T-cell (primary cell): ENCODE measurements at regions of chr2 and their contacts with region 1.

Region 1: DNA sequence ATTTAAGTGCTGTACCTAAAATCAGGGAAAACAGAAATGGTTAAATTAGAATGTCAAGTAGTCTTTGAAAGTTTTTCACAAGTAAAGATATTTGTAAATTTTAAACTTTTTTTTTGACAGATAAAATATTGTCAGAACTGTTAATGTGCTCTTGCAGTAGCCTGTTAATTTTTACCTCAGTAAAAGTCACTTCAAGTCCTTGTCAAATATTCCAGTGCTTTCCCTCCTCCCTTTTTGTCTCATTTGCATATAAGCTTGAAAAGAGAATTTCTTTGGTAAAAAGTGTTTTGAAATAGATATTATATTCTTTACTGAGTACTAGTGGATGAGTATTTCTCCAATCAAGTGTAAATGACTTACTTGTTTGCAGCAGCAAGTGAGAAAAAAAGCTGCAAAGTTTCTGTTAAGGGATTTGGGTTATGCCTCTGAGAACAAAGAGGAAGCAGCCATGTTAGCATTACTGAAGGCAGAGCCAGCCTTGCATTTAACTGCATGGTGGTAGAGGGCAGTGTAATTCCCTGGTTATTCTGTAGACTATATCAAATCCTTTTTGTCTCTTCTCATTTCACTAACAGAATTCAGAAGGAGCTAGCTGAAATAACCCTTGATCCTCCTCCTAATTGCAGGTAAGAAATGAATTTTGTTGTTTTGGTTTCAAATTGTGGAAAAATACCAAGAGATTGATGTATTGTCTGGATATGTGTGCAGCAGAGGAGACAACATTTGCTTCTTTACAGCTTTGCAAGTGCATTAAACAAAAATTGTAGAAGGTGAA is 3.2 kb downstream of the UBE2E3 start:
- DNase-seq: peak in 22 of 35 experiments; percentile 3 to 67 (median 19)
- ATAC-seq: peak in 3 of 4 experiments; percentile 28 to 53 (median 31)
- H3K4me3 ChIP-seq: no peak overlapping the region
- H3K4me3 Mint-ChIP-seq: peak overlapping the region in 1 of 3 donors; percentile 41
- H3K27ac ChIP-seq: no peak overlapping the region
- H3K27ac Mint-ChIP-seq: no peak overlapping the region
- H3K4me1 ChIP-seq: peaks cover 15 to 25% of the 10 kb centered on the region in 2 experiments
- H3K4me1 Mint-ChIP-seq: peaks cover 36 to 60% (median 57%) of the 10 kb centered on the region in 3 donors
- H3K27me3 ChIP-seq: no peaks in the 10 kb centered on the region
- H3K27me3 Mint-ChIP-seq: no peaks in the 10 kb centered on the region

Region 2: GRCh38 chr2:181036848-181037603 is 53.4 kb after region 1 on chr2:
- CTCF ChIA-PET with region 1: interaction called in 1 of 2 experiments, 12 read pairs
- POLR2A ChIA-PET with region 1: no interaction called
- DNase-seq: peak in 1 of 35 experiments; percentile 3
- ATAC-seq: peak in 1 of 4 experiments; percentile 55
- H3K4me3 ChIP-seq: no peak overlapping the region
- H3K4me3 Mint-ChIP-seq: no peak overlapping the region
- H3K27ac ChIP-seq: no peak overlapping the region
- H3K27ac Mint-ChIP-seq: no peak overlapping the region
- H3K4me1 ChIP-seq: peaks cover 0 to 2% of the 10 kb centered on the region in 2 experiments
- H3K4me1 Mint-ChIP-seq: peaks cover 16 to 30% (median 20%) of the 10 kb centered on the region in 3 donors
- H3K27me3 ChIP-seq: no peaks in the 10 kb centered on the region
- H3K27me3 Mint-ChIP-seq: no peaks in the 10 kb centered on the region

Region 3: GRCh38 chr2:181052523-181052891 is 68.9 kb after region 1 on chr2:
- CTCF ChIA-PET with region 1: no interaction called
- POLR2A ChIA-PET with region 1: no interaction called
- DNase-seq: no peak
- ATAC-seq: no peak
- H3K4me3 ChIP-seq: no peak overlapping the region
- H3K4me3 Mint-ChIP-seq: no peak overlapping the region
- H3K27ac ChIP-seq: no peak overlapping the region
- H3K27ac Mint-ChIP-seq: no peak overlapping the region
- H3K4me1 ChIP-seq: no peaks in the 10 kb centered on the region
- H3K4me1 Mint-ChIP-seq: peaks cover 7 to 10% (median 9%) of the 10 kb centered on the region in 3 donors
- H3K27me3 ChIP-seq: no peaks in the 10 kb centered on the region
- H3K27me3 Mint-ChIP-seq: no peaks in the 10 kb centered on the region

Region 4: DNA sequence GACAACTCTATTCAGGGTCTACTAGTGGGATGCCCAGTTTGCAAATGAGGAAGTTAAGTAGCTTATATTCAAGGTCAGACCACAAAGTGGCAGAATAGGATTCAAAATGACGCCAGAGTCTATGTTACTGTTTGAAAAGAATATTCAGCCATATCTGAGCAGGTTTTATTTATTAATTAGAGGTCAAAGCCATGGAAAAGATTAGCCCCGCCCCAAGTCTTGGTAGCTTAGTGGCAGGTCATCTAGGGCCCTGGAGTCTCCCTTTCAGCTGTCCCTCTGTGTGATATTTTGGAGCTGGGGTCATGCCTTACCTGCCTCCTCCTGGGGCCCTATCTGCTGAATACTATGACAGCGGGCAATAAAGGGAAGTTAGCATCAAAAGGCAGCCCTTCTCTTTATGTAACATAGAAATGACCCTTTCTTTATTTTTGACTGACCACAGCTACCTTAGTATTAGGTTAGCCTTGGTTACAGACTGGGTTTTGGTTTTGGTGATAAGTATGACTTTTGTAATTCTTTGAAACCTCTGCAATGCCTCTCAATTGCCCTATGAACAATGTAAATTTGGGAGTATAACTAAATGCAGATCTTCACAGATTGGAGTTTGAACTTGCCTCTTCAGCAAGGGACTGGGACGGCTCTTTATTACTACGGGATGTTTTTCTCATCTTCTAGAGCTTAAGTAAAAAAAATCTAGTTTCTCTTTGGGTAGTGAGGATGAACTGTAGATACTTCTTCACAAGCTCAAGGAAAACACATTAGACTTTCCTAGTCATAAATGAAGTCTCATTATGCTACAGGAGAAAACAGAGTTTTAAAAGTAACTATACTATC is 320.6 kb after region 1 on chr2:
- CTCF ChIA-PET with region 1: no interaction called
- POLR2A ChIA-PET with region 1: no interaction called
- DNase-seq: peak in 1 of 35 experiments; percentile 49
- ATAC-seq: peak in 3 of 4 experiments; percentile 6 to 23 (median 12)
- H3K4me3 ChIP-seq: no peak overlapping the region
- H3K4me3 Mint-ChIP-seq: peak overlapping the region; percentile 34 to 80 (median 46)
- H3K27ac ChIP-seq: peak overlapping the region; percentile 98
- H3K27ac Mint-ChIP-seq: peak overlapping the region; percentile 96 to 100
- H3K4me1 ChIP-seq: peaks cover 49 to 72% of the 10 kb centered on the region in 2 experiments
- H3K4me1 Mint-ChIP-seq: peaks cover 77 to 85% (median 84%) of the 10 kb centered on the region in 3 donors
- H3K27me3 ChIP-seq: no peaks in the 10 kb centered on the region
- H3K27me3 Mint-ChIP-seq: no peaks in the 10 kb centered on the region